ENCODE measurements at regions of chr6 and their contacts with region 1.

Region 1: GRCh38 chr6:77814119-77814518 is 161.3 kb downstream of the MEI4 start:
- DNase-seq: peak in 1 of 2 experiments; percentile 33
- H3K4me3 ChIP-seq: no peak overlapping the region
- H3K4me3 Mint-ChIP-seq: peak overlapping the region; percentile 41
- H3K27ac Mint-ChIP-seq: peak overlapping the region; percentile 86
- H3K4me1 ChIP-seq: peaks cover 35% of the 10 kb centered on the region
- H3K4me1 Mint-ChIP-seq: peaks cover 30% of the 10 kb centered on the region
- H3K27me3 ChIP-seq: no peaks in the 10 kb centered on the region
- H3K27me3 Mint-ChIP-seq: no peaks in the 10 kb centered on the region
- CTCF ChIP-seq: no peak

Region 2: GRCh38 chr6:77834591-77834996 is 20.5 kb after region 1 on chr6:
- CTCF ChIA-PET with region 1: no interaction called
- POLR2A ChIA-PET with region 1: no interaction called
- intact Hi-C with region 1: loop called (anchors 1 kb)
- DNase-seq: peak; percentile 73 to 81
- H3K4me3 ChIP-seq: no peak overlapping the region
- H3K4me3 Mint-ChIP-seq: no peak overlapping the region
- H3K27ac Mint-ChIP-seq: no peak overlapping the region
- H3K4me1 ChIP-seq: peaks cover 15% of the 10 kb centered on the region
- H3K4me1 Mint-ChIP-seq: peaks cover 6% of the 10 kb centered on the region
- H3K27me3 ChIP-seq: no peaks in the 10 kb centered on the region
- H3K27me3 Mint-ChIP-seq: no peaks in the 10 kb centered on the region
- CTCF ChIP-seq: no peak

Region 3: DNA sequence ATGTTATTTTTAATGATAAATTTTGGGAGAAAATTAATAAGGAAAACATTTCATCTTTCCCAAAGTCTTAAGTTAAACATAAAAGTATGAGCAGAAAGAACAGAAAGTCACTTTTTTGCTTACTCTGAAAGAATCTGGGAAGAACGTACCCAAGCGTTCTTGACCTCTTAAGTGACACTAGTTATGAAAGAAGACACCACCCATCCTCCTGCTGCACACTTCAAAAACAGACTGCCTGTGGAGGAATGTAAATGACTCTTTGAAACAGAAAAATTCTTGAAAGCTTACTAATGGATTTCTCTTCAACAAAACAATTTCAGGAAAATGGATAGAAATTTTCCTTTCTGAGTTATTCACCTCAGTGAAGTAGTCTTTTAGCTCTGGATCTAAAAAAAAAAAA is 66.4 kb after region 1 on chr6:
- CTCF ChIA-PET with region 1: no interaction called
- POLR2A ChIA-PET with region 1: no interaction called
- intact Hi-C with region 1: no loop called
- DNase-seq: no peak
- H3K4me3 ChIP-seq: no peak overlapping the region
- H3K4me3 Mint-ChIP-seq: no peak overlapping the region
- H3K27ac Mint-ChIP-seq: no peak overlapping the region
- H3K4me1 ChIP-seq: no peaks in the 10 kb centered on the region; the same call in 1 of the 2 replicates
- H3K4me1 Mint-ChIP-seq: peaks cover 6% of the 10 kb centered on the region
- H3K27me3 ChIP-seq: no peaks in the 10 kb centered on the region
- H3K27me3 Mint-ChIP-seq: no peaks in the 10 kb centered on the region
- CTCF ChIP-seq: no peak

Region 4: GRCh38 chr6:77893391-77893790 is 79.3 kb after region 1 on chr6:
- CTCF ChIA-PET with region 1: no interaction called
- POLR2A ChIA-PET with region 1: no interaction called
- intact Hi-C with region 1: no loop called
- DNase-seq: no peak
- H3K4me3 ChIP-seq: no peak overlapping the region
- H3K4me3 Mint-ChIP-seq: no peak overlapping the region
- H3K27ac Mint-ChIP-seq: no peak overlapping the region
- H3K4me1 ChIP-seq: no peaks in the 10 kb centered on the region
- H3K4me1 Mint-ChIP-seq: no peaks in the 10 kb centered on the region
- H3K27me3 ChIP-seq: no peaks in the 10 kb centered on the region
- H3K27me3 Mint-ChIP-seq: no peaks in the 10 kb centered on the region
- CTCF ChIP-seq: no peak

Region 5: DNA sequence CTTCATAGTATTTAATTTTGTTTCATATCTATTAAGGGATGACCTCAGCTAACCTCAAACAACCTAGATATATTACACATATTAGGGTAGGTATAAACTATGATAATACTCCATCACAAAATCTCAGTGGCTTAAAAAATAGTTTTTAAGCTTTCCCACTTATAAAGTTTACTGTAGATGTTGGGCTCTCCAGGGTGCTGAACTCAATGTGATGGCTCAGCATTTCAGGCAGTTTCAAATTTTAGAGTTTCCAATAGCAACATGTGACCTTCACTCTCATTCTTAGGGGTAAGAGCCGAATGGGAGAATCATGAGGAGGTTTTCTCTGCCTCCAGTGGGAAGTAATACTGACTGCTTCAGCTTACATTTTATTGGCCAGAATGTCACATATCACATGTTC is 196.0 kb after region 1 on chr6:
- CTCF ChIA-PET with region 1: no interaction called
- POLR2A ChIA-PET with region 1: no interaction called
- intact Hi-C with region 1: no loop called
- DNase-seq: no peak
- H3K4me3 ChIP-seq: no peak overlapping the region
- H3K4me3 Mint-ChIP-seq: no peak overlapping the region
- H3K27ac Mint-ChIP-seq: no peak overlapping the region
- H3K4me1 ChIP-seq: no peaks in the 10 kb centered on the region
- H3K4me1 Mint-ChIP-seq: no peaks in the 10 kb centered on the region
- H3K27me3 ChIP-seq: no peaks in the 10 kb centered on the region; the same call in 1 of the 2 replicates
- H3K27me3 Mint-ChIP-seq: peaks cover 2% of the 10 kb centered on the region
- CTCF ChIP-seq: no peak

Measured in Caco-2 (cell line).